ENCODE measurements at regions of chr2 and their contacts with region 1.

Region 1: GRCh38 chr2:239275044-239275685 is 125.7 kb downstream of the HDAC4 start:
- DNase-seq: peak; percentile 81
- H3K4me3 Mint-ChIP-seq: peak overlapping the region; percentile 63
- H3K27ac Mint-ChIP-seq: peak overlapping the region; percentile 83
- H3K4me1 Mint-ChIP-seq: peaks cover 70% of the 10 kb centered on the region
- H3K27me3 Mint-ChIP-seq: peaks cover 8% of the 10 kb centered on the region

Region 2: GRCh38 chr2:238929242-238930081 is 345.7 kb before region 1 on chr2:
- intact Hi-C with region 1: no loop called
- DNase-seq: no peak
- H3K4me3 Mint-ChIP-seq: no peak overlapping the region
- H3K27ac Mint-ChIP-seq: no peak overlapping the region
- H3K4me1 Mint-ChIP-seq: no peaks in the 10 kb centered on the region
- H3K27me3 Mint-ChIP-seq: peaks cover 11% of the 10 kb centered on the region

Region 3: GRCh38 chr2:239259603-239260298 is 15.4 kb before region 1 on chr2:
- intact Hi-C with region 1: loop called (anchors 1 kb)
- DNase-seq: no peak
- H3K4me3 Mint-ChIP-seq: peak overlapping the region; percentile 83
- H3K27ac Mint-ChIP-seq: peak overlapping the region; percentile 93
- H3K4me1 Mint-ChIP-seq: peaks cover 83% of the 10 kb centered on the region
- H3K27me3 Mint-ChIP-seq: no peaks in the 10 kb centered on the region

Region 4: DNA sequence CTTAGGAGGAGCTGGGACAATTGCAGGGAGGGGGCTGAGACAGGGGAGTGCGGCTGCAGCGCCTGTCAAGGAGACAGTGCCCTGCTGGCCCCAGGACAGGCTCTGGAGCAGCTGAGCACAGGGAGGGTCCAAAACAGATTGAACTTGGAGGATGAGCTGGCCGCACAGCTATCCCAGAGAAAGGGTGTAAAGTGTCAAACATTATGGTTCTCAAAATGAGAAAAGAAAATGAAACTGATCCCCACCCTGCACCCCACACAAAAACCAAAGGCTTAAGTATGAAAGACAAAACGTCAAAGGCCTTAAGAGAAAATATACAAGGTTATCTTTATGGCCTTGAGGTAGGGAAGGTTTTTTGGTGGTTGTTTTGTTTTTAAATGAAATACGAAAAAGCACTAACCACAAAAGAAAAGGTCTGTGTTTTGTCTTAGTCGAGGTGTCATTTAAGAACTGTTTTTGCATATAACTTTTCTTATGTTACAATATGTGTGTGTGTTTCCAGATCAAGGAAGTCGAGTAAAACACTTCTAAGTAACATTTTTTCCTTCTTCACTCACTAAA is 13.9 kb after region 1 on chr2:
- intact Hi-C with region 1: loop called (anchors 1 kb)
- DNase-seq: peak; percentile 61
- H3K4me3 Mint-ChIP-seq: peak overlapping the region; percentile 77
- H3K27ac Mint-ChIP-seq: peak overlapping the region; percentile 98
- H3K4me1 Mint-ChIP-seq: peaks cover 78% of the 10 kb centered on the region
- H3K27me3 Mint-ChIP-seq: peaks cover 7% of the 10 kb centered on the region

Region 5: GRCh38 chr2:239298116-239298804 is 23.1 kb after region 1 on chr2:
- intact Hi-C with region 1: loop called (anchors 1 kb)
- DNase-seq: peak; percentile 72
- H3K4me3 Mint-ChIP-seq: peak overlapping the region; percentile 84
- H3K27ac Mint-ChIP-seq: peak overlapping the region; percentile 91
- H3K4me1 Mint-ChIP-seq: peaks cover 71% of the 10 kb centered on the region
- H3K27me3 Mint-ChIP-seq: peaks cover 2% of the 10 kb centered on the region

Region 6: DNA sequence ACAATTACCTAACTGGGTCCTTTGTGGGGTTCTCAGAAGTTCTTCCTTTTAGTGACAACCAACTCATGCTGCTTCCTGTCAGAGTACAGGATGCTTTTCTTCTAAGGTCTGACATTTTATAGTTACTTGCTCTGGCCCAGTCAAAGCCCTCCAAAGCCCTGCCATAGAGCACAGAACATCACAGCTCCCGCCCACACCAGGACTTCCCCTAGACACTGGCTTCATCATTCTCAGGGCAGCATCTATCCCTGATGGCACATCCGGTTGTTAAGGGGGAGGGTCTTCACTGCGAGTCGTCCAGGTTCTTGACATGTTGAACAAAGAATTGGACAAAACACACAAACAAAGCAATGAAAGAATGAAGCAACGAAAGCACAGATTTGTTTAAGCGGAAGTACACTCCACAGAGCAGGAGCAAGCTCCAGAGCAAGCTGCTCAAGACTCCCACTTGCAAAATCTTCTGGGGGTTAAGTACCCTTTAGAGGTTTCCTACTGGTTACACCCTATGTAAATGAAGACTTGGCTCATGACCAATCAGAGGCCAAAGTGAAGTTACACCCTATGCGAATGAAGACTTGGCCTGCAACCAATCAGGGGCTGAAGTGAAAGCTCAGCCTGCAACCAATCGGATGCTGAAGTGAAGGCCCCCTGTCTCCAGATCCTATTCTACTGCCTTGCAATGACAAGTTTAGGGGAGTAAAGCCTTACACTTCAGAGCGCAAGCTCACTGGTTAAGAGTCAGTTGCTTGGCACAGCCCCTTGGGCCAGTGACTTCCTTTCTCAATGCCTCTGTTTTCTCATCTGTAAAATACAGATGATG is 46.6 kb after region 1 on chr2:
- intact Hi-C with region 1: loop called (anchors 1 kb)
- DNase-seq: peak; percentile 73
- H3K4me3 Mint-ChIP-seq: peak overlapping the region; percentile 76
- H3K27ac Mint-ChIP-seq: peak overlapping the region; percentile 97
- H3K4me1 Mint-ChIP-seq: peaks cover 88% of the 10 kb centered on the region
- H3K27me3 Mint-ChIP-seq: no peaks in the 10 kb centered on the region

Region 7: DNA sequence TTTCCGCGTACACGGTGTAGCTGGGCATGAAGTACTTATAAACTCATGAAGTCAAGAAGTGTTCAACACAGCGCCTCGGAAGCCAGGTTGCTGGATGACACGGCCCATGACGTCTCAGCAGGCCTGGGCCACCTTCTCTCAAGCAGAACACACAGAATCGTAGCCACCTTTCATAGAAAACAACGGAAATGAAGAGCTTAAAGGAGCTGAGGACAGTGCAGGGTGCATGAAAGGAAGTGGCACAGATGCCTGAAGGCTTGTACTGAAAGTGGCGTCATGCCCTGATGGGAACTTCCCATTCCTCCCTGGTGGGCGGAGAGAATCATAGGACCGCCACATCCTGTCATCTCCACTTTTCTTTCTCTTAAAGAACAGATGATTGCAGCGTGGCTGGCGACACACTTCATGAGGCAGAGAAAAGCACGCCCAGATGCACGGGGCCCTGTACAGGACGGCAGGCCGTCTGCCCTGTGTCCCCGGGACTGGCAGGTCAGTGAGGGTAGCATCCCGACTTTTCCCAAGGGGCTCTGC is 94.5 kb after region 1 on chr2:
- intact Hi-C with region 1: loop called (anchors 1 kb)
- DNase-seq: peak; percentile 83
- H3K4me3 Mint-ChIP-seq: no peak overlapping the region
- H3K27ac Mint-ChIP-seq: peak overlapping the region; percentile 92
- H3K4me1 Mint-ChIP-seq: peaks cover 26% of the 10 kb centered on the region
- H3K27me3 Mint-ChIP-seq: no peaks in the 10 kb centered on the region

Region 8: DNA sequence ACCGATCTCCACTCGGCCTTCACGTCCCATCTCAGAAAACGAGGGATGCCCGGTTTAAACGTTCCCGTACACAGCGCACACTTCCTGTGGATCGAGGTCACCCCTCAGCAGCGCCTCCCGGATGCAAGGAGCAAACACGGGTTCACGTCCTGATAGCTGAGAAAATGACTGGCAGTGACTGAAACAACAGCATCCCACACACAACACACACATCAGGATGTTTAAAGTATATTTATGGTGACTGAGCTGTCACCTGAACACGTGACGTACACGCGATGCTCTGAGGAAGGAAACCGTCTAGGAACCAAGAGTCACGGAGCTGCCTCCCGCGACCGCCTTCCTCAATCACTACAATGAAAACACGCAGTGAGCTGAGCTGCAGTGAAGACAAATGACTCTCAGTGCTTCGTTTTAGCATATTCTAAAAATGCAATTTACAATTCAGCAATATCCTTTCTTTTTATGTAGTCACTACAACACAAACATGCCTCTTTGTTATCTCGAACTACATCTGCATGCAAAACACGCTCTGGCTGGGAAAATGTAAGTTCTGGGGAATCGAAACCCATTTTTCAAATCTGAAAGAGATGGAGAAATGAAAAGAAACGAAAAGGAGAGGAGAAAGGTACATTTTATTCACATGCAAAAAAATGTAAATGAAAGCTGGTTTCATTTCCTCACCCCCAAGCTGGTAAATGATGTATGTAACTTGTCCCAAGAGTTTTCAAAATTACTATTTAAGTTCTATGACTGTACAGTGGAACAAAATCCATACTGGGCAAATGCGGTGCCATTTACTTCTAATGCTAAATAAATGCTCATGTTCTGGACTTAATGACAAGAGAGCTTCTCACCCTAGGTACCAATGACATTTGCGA is 105.9 kb after region 1 on chr2:
- intact Hi-C with region 1: loop called (anchors 1 kb)
- DNase-seq: peak; percentile 64
- H3K4me3 Mint-ChIP-seq: peak overlapping the region; percentile 83
- H3K27ac Mint-ChIP-seq: peak overlapping the region; percentile 94
- H3K4me1 Mint-ChIP-seq: peaks cover 38% of the 10 kb centered on the region
- H3K27me3 Mint-ChIP-seq: peaks cover 2% of the 10 kb centered on the region